H1 (cell line): ENCODE measurements at regions of chr12 and their contacts with region 1.

Region 1: DNA sequence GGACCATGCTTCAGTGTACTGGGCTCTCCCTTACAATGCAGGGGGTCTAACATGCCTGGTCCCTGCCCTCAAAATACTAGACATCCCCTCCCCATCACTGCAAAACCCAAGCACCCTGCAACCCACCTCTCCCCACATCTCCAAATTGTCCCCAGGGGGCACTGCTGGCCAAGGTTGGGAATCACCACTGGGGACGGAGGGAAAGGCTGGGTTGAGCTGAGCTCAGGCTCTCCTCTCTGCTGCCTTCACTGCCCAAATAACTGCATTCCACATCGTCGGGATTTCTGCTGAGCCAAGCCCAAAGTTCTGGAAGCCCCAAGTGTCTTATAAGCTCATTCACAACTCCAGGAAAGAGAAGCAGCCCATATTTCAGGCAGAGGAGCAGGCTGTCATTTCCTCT is 69.6 kb downstream of the NT5DC3 start:
- DNase-seq: peak; percentile 38 to 76
- H3K4me3 ChIP-seq: no peak overlapping the region
- H3K27ac ChIP-seq: no peak overlapping the region
- H3K4me1 ChIP-seq: peaks cover 0 to 10% (median 8%) of the 10 kb centered on the region in 4 experiments; a peak in 6 of 7 replicates
- H3K27me3 ChIP-seq: no peaks in the 10 kb centered on the region
- CTCF ChIP-seq: peak; percentile 75 to 86 (median 78)
- EP300 ChIP-seq: no peak
- POLR2A ChIP-seq: no peak
- RAD21 ChIP-seq: peak; percentile 87 to 92

Region 2: GRCh38 chr12:103758310-103759089 is 13.0 kb before region 1 on chr12:
- CTCF ChIA-PET with region 1: interaction called, 29 read pairs
- POLR2A ChIA-PET with region 1: interaction called, 4 read pairs
- DNase-seq: no peak
- H3K4me3 ChIP-seq: no peak overlapping the region
- H3K27ac ChIP-seq: no peak overlapping the region; the same call in 1 of the 2 replicates
- H3K4me1 ChIP-seq: peaks cover 0 to 4% (median 1%) of the 10 kb centered on the region in 4 experiments; a peak in 1 of 7 replicates
- H3K27me3 ChIP-seq: no peaks in the 10 kb centered on the region
- CTCF ChIP-seq: peak in 2 of 3 experiments; percentile 9 to 16; a peak in 2 of 4 replicates
- EP300 ChIP-seq: no peak
- POLR2A ChIP-seq: no peak
- RAD21 ChIP-seq: peak; percentile 20 to 23; a peak in 2 of 4 replicates

Region 3: GRCh38 chr12:103868215-103868614 is 96.7 kb after region 1 on chr12:
- CTCF ChIA-PET with region 1: interaction called, 27 read pairs
- POLR2A ChIA-PET with region 1: no interaction called
- DNase-seq: no peak
- H3K4me3 ChIP-seq: no peak overlapping the region
- H3K27ac ChIP-seq: no peak overlapping the region
- H3K4me1 ChIP-seq: no peaks in the 10 kb centered on the region
- H3K27me3 ChIP-seq: no peaks in the 10 kb centered on the region
- CTCF ChIP-seq: no peak
- EP300 ChIP-seq: no peak
- POLR2A ChIP-seq: no peak
- RAD21 ChIP-seq: no peak